SK-N-SH (cell line): ENCODE measurements at regions of chr17 and their contacts with region 1.

Region 1: GRCh38 chr17:49496183-49496866 is 1.2 kb downstream of the NGFR start:
- DNase-seq: peak; percentile 96
- H3K4me3 ChIP-seq: peak overlapping the region; percentile 54 to 63
- H3K27ac ChIP-seq: no peak overlapping the region; a peak in 1 of 4 replicates
- H3K4me1 ChIP-seq: peaks cover 5 to 42% of the 10 kb centered on the region in 2 experiments; a peak in 2 of 4 replicates
- H3K27me3 ChIP-seq: peaks cover 80% of the 10 kb centered on the region
- CTCF ChIP-seq: peak; percentile 81
- EP300 ChIP-seq: no peak
- RAD21 ChIP-seq: peak; percentile 73

Region 2: DNA sequence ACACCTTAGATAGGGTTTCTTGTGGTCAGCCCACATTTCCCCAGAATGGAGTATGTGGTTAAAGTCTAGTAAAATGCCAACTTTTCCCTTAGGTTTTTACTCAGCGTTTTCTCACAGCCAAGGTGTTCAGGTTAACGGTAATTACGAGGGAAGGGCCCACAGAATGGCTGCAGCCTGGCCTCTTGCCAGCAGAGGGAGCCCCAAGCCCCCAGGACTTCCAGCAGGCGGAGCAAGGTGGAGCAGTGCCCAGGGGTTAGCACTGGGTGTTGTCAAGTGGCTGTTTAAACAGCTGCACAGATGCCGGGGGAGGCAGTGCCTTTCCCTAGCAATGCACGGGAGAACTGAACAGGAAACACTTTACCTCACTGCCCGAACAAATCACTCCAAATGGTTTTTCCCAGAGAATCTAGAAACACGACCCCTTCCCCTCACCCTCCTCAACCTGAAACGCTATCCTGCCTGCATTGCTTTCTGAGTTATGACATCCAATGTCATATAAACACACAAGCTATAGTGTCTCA is 88.3 kb before region 1 on chr17:
- CTCF ChIA-PET with region 1: interaction called, 42 read pairs
- POLR2A ChIA-PET with region 1: no interaction called
- DNase-seq: peak; percentile 92
- H3K4me3 ChIP-seq: peak overlapping the region in 1 of 2 experiments; percentile 27; a peak in 1 of 4 replicates
- H3K27ac ChIP-seq: no peak overlapping the region
- H3K4me1 ChIP-seq: peaks cover 0 to 4% of the 10 kb centered on the region in 2 experiments; a peak in 1 of 4 replicates
- H3K27me3 ChIP-seq: no peaks in the 10 kb centered on the region
- CTCF ChIP-seq: peak; percentile 100
- EP300 ChIP-seq: no peak
- RAD21 ChIP-seq: peak; percentile 86

Region 3: GRCh38 chr17:49450735-49451134 is 45.6 kb before region 1 on chr17:
- CTCF ChIA-PET with region 1: interaction called, 23 read pairs
- POLR2A ChIA-PET with region 1: no interaction called
- DNase-seq: no peak
- H3K4me3 ChIP-seq: no peak overlapping the region
- H3K27ac ChIP-seq: peak overlapping the region in 1 of 2 experiments; percentile 20; a peak in 1 of 4 replicates
- H3K4me1 ChIP-seq: peaks cover 18 to 19% of the 10 kb centered on the region in 2 experiments; a peak in 3 of 4 replicates
- H3K27me3 ChIP-seq: no peaks in the 10 kb centered on the region; the same call in 1 of the 2 replicates
- CTCF ChIP-seq: no peak
- EP300 ChIP-seq: no peak
- RAD21 ChIP-seq: no peak

Region 4: DNA sequence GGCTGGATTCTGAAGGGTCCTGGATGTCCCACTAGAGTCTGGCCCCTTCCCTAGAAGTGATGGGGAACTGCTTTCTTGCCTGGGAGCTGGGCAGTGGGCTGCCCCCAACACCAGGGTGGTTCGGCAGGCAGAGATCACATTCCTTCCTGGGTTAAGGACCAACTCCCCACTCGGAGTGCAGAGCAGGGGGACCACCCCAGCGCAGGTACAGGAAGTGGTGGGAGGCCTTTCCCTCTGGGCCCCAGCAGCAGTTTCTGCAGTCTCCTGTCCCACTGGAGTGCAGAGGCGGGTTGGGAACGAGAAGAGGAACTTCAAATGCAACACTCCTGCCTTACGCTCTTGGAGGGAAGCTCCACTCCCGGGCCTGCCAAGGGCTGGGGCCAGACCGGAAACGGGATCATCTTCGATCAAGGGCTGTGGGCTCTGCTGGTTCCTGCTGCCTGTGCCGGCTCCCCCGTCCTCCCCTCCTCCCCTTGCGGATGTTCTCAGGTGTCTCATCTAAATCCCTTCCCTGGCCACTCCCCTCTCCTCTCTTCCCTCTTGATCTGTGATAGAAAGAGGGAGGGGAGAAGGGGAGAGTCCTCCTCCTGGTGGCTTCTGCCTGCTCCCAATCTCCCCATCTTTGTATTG is 10.2 kb before region 1 on chr17:
- CTCF ChIA-PET with region 1: interaction called, 179 read pairs
- POLR2A ChIA-PET with region 1: interaction called, 12 read pairs
- DNase-seq: no peak
- H3K4me3 ChIP-seq: no peak overlapping the region
- H3K27ac ChIP-seq: no peak overlapping the region
- H3K4me1 ChIP-seq: peaks cover 0 to 28% of the 10 kb centered on the region in 2 experiments; a peak in 1 of 4 replicates
- H3K27me3 ChIP-seq: peaks cover 76% of the 10 kb centered on the region
- CTCF ChIP-seq: no peak
- EP300 ChIP-seq: no peak
- RAD21 ChIP-seq: no peak

Region 5: DNA sequence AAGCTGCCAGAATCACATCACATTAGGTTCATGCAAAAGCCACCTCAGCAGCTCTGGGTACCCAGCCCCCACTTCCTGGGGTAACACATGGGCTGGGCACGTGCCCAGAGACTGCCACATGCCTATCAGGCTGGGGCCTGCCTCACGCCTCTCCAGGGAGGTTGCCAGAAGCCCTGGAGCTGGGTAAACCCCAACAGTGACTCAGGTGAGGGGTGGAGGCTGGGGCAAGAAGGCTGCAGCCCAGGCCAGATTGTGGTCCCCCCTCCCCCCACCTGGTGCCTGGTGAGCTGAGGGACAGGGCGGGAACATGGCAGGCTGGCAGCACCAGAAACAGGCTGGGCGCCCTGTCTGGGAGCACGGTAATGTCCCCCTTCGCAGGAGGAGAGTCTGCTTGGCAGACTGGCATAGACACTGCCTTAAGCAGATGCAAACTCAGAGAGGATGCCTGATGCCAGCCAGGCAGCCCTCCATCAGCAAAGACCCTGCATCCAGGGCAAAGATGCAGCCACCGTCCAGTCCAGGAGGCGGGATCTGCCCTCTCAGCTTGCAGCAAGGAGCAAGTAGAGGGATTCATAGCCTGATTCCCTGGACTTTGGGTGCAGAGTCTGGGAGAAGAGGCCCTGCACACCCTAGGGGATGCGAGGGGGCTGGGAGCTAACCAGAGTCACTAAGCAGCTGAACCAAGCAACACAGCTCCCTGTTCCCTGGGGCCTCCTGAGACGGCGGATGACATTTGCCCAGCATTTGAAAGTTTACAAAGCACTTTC is 27.6 kb after region 1 on chr17:
- CTCF ChIA-PET with region 1: interaction called, 28 read pairs
- POLR2A ChIA-PET with region 1: interaction called, 3 read pairs
- DNase-seq: peak; percentile 56
- H3K4me3 ChIP-seq: no peak overlapping the region
- H3K27ac ChIP-seq: peak overlapping the region in 1 of 2 experiments; percentile 66; a peak in 1 of 4 replicates
- H3K4me1 ChIP-seq: peaks cover 0 to 63% of the 10 kb centered on the region in 2 experiments; a peak in 1 of 4 replicates
- H3K27me3 ChIP-seq: peaks cover 8% of the 10 kb centered on the region; the same call in 1 of the 2 replicates
- CTCF ChIP-seq: no peak
- EP300 ChIP-seq: no peak
- RAD21 ChIP-seq: no peak